ENCODE measurements at regions of chr2 and their contacts with region 1.

Region 1: DNA sequence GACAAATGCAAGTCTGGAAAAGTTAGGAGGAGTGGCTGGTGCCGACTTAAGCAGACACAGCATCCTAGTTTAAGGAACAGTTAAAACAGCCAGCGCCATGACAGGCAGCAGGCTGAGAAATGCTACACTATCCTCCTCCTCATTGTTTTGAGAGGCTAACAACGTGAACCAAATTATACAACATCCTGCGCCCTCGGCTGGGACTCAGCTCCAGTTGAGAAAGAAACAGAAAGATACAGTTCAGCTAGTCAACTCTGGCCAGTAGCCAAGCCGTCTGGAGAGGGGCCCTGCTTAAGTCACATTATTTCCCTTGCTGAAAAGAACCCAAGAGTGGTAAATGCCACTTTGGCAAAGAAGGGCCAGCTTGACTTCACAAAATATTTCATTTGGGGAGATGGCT is 90.2 kb downstream of the BCL11A start:
- DNase-seq: no peak
- ATAC-seq: no peak
- H3K4me3 Mint-ChIP-seq: no peak overlapping the region
- H3K27ac Mint-ChIP-seq: peak overlapping the region; percentile 83
- H3K4me1 Mint-ChIP-seq: peaks cover 54% of the 10 kb centered on the region
- H3K27me3 Mint-ChIP-seq: no peaks in the 10 kb centered on the region
- CTCF ChIP-seq: no peak

Region 2: DNA sequence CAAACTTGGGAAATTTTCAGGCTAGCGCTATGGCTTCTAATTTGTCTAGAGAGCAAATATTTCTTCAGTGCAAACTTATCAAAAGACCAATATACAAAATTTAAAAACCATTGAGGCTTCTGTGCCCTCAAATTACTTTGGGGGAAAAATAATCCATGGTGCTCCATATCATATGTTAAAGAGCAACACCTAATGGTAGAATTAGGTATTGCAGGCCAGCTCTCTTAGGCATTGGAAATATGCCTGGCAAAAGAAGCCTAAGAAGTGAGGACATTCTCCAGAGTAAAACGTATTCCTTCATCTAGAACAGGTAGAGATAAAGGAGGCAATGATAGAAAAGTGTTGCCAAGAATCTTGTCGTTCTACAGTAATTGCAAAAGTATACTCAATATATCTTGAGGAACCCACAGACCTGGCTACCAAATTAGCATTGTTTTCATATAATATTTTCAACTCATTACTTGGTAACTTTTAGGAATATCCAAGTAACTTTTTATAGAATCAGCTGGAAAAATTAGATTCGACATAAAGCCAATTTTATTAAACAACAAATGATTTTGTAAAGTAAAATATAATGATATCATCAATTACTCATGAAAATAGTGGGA is 310.9 kb before region 1 on chr2:
- CTCF ChIA-PET with region 1: no interaction called
- POLR2A ChIA-PET with region 1: no interaction called
- intact Hi-C with region 1: no loop called
- DNase-seq: no peak
- ATAC-seq: no peak
- H3K4me3 Mint-ChIP-seq: no peak overlapping the region
- H3K27ac Mint-ChIP-seq: no peak overlapping the region
- H3K4me1 Mint-ChIP-seq: peaks cover 23% of the 10 kb centered on the region
- H3K27me3 Mint-ChIP-seq: no peaks in the 10 kb centered on the region
- CTCF ChIP-seq: no peak

Region 3: GRCh38 chr2:60476206-60476954 is 13.1 kb after region 1 on chr2:
- CTCF ChIA-PET with region 1: interaction called, 3 read pairs
- POLR2A ChIA-PET with region 1: interaction called, 10 read pairs
- intact Hi-C with region 1: loop called (anchors 1 kb)
- DNase-seq: no peak
- ATAC-seq: no peak
- H3K4me3 Mint-ChIP-seq: peak overlapping the region; percentile 39
- H3K27ac Mint-ChIP-seq: peak overlapping the region; percentile 84
- H3K4me1 Mint-ChIP-seq: peaks cover 100% of the 10 kb centered on the region
- H3K27me3 Mint-ChIP-seq: no peaks in the 10 kb centered on the region
- CTCF ChIP-seq: no peak

Measured in activated B cell treated with CpG ODN at 0.5 μM for 24 hours (primary cell).